ENCODE measurements at regions of chr19 and their contacts with region 1.

Region 1: GRCh38 chr19:14147797-14148605 is 11.6 kb upstream of the ASF1B start:
- DNase-seq: no peak
- H3K4me3 ChIP-seq: no peak overlapping the region
- H3K27me3 ChIP-seq: no peaks in the 10 kb centered on the region
- CTCF ChIP-seq: peak; percentile 95

Region 2: DNA sequence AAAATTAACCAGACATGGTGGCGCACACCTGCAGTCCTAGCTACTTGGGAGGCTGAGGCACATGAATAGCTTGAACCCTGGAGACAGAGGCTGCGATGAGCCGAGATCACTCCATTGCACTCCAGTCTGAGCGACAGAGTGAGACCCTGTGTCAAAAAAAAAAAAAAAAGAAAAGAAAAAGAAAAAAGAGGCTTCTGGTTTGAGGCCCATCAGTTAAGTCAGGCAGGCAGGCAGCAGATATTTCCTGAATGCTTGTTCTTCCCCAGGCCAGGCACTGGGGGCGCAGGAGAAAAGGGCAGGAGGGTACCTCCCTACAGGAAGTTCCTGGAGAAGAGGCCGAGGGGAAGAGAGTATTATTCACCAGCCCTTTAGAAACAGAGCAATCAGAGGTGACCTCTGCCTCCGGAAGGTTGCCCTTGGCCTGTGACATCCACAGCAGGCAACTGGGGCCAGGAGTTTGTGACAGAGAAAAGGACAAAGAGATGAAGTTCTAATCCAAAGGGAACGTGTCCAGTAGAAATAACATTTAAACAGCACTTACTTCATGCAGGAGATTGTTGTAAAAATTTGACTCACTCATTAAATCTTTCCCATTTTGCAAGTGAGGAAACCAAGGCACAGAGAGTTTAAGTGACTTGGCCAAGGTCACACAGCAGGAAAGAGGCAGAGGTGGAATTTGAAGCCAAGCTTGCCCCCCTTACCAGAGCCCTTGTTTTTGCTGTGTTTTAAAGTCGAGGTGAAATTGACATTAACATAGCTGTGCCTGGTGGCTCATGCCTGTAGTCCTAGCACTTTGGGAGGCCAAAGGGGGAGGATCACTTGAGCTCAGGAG is 124.4 kb before region 1 on chr19:
- CTCF ChIA-PET with region 1: no interaction called
- POLR2A ChIA-PET with region 1: no interaction called
- DNase-seq: no peak
- H3K4me3 ChIP-seq: no peak overlapping the region
- H3K27me3 ChIP-seq: peaks cover 6% of the 10 kb centered on the region
- CTCF ChIP-seq: peak; percentile 32; the same call in 1 of the 2 replicates

Region 3: GRCh38 chr19:14158276-14159023 is 10.4 kb after region 1 on chr19:
- CTCF ChIA-PET with region 1: interaction called, 13 read pairs
- POLR2A ChIA-PET with region 1: no interaction called
- DNase-seq: no peak
- H3K4me3 ChIP-seq: no peak overlapping the region
- H3K27me3 ChIP-seq: no peaks in the 10 kb centered on the region
- CTCF ChIP-seq: no peak